ENCODE measurements at regions of chr6 and their contacts with region 1.

Region 1: GRCh38 chr6:36765594-36766398 is 68.2 kb downstream of the RAB44 start:
- DNase-seq: peak; percentile 86
- ATAC-seq: peak; percentile 87 to 90
- H3K4me3 ChIP-seq: no peak overlapping the region
- H3K27ac ChIP-seq: no peak overlapping the region
- H3K4me1 ChIP-seq: peaks cover 29% of the 10 kb centered on the region
- H3K27me3 ChIP-seq: no peaks in the 10 kb centered on the region
- CTCF ChIP-seq: peak; percentile 89

Region 2: DNA sequence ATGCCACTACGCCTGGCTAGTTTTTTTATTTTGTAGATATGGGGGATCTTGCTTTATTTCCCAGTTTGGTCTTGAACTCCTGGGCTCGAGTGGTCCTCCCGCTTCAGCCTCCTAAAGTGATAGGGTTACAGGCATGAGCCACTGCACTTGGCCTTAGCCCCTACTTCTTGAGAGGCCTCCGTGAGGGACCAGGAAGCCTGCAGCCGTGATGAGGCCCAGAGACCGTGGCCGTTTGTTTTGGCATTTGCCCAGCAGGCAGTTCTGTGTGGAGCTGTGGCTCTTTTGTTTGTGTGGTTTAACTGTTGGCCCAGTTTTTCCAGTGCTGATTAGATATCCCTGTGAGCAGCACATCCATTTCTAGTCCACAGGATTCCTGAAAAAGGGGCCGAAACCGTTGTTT is 131.9 kb before region 1 on chr6:
- intact Hi-C with region 1: no loop called
- DNase-seq: peak; percentile 75
- ATAC-seq: peak; percentile 51 to 70
- H3K4me3 ChIP-seq: no peak overlapping the region
- H3K27ac ChIP-seq: peak overlapping the region; percentile 46
- H3K4me1 ChIP-seq: peaks cover 18% of the 10 kb centered on the region
- H3K27me3 ChIP-seq: no peaks in the 10 kb centered on the region
- CTCF ChIP-seq: no peak

Region 3: DNA sequence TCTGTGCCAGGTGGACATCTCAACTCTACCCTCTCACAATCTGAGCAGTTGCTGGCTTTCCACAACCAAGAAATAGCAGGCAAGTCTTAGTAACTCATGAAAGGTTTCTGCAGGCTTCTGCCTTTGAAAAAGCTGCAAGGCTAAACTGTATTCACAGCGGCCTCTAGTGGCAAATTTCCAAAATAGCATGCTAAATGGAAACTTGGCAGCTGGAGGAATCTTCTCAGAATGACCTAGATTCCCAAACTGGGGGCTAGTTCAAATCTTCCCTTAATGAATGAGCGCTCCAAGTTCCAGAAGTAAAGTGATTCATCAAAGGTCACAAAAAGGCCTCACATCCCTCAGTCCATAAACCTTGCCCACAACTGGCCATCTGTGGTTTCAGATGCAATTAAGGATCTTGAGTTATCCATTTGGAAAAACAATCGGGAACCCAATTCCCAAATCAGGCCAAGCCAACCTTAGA is 85.4 kb after region 1 on chr6:
- intact Hi-C with region 1: loop called (anchors 5 kb)
- DNase-seq: no peak
- ATAC-seq: peak; percentile 40 to 49
- H3K4me3 ChIP-seq: no peak overlapping the region
- H3K27ac ChIP-seq: no peak overlapping the region
- H3K4me1 ChIP-seq: peaks cover 32% of the 10 kb centered on the region
- H3K27me3 ChIP-seq: no peaks in the 10 kb centered on the region
- CTCF ChIP-seq: peak; percentile 78

Region 4: GRCh38 chr6:37483917-37484785 is 718.4 kb after region 1 on chr6:
- intact Hi-C with region 1: no loop called
- DNase-seq: peak; percentile 63
- ATAC-seq: peak; percentile 74 to 83
- H3K4me3 ChIP-seq: no peak overlapping the region
- H3K27ac ChIP-seq: no peak overlapping the region
- H3K4me1 ChIP-seq: no peaks in the 10 kb centered on the region
- H3K27me3 ChIP-seq: no peaks in the 10 kb centered on the region
- CTCF ChIP-seq: peak; percentile 71